ENCODE measurements at regions of chr3 and their contacts with region 1.

Region 1: GRCh38 chr3:103991461-103992115 is 1375.1 kb upstream of the ALCAM start:
- DNase-seq: no peak
- H3K4me3 ChIP-seq: no peak overlapping the region
- H3K27ac ChIP-seq: no peak overlapping the region
- H3K4me1 ChIP-seq: no peaks in the 10 kb centered on the region
- H3K27me3 ChIP-seq: no peaks in the 10 kb centered on the region
- CTCF ChIP-seq: peak; percentile 75

Region 2: GRCh38 chr3:103752986-103753385 is 238.6 kb before region 1 on chr3:
- CTCF ChIA-PET with region 1: no interaction called
- POLR2A ChIA-PET with region 1: no interaction called
- intact Hi-C with region 1: no loop called
- DNase-seq: peak in 1 of 2 experiments; percentile 16
- H3K4me3 ChIP-seq: no peak overlapping the region
- H3K27ac ChIP-seq: no peak overlapping the region
- H3K4me1 ChIP-seq: no peaks in the 10 kb centered on the region
- H3K27me3 ChIP-seq: no peaks in the 10 kb centered on the region
- CTCF ChIP-seq: no peak

Region 3: GRCh38 chr3:105351821-105352220 is 1360.2 kb after region 1 on chr3:
- CTCF ChIA-PET with region 1: interaction called, 10 read pairs
- POLR2A ChIA-PET with region 1: no interaction called
- intact Hi-C with region 1: no loop called
- DNase-seq: peak in 1 of 2 experiments; percentile 76
- H3K4me3 ChIP-seq: no peak overlapping the region
- H3K27ac ChIP-seq: no peak overlapping the region
- H3K4me1 ChIP-seq: peaks cover 23% of the 10 kb centered on the region
- H3K27me3 ChIP-seq: no peaks in the 10 kb centered on the region
- CTCF ChIP-seq: no peak